ENCODE measurements at regions of chr22 and their contacts with region 1.

Region 1: DNA sequence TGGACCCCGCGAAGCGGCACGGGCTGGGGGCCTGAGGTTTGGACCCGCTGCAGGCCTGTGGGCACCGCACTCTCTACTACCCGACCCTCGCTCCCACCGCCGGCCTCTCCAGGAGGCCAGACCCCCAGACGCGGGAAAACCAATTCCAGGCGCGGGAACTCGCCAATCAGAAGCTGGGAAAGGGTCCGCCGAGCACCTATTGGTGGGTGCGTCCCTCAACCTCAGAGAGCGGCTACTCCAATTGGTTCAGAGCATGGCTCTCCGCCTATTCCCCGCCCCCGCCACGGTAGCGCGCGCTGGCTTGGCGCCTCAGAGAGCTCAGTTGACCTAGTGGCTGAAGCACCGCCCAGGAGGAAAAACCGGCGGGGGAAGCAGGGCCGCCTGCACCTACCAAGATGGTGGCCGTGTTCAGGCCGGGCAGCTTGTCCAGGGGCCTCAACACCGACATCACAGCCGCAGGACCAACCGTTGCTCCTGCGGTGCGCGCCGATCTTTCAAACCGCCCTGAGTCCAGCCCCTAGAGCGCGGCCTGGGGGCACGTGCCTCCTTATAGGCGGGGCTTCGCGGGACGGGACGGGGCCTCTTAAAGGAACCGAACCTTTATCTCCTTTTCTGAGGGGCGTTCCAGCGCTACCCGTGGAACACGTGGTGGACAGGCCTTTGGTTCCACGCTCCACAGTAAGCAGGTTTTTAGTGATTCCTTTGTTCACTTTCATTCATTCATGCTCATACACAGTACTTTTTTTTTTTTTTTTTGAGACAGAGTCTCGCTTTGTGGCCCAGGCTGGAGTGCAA is at the start of gene CENPM:
- DNase-seq: peak; percentile 92

Region 2: DNA sequence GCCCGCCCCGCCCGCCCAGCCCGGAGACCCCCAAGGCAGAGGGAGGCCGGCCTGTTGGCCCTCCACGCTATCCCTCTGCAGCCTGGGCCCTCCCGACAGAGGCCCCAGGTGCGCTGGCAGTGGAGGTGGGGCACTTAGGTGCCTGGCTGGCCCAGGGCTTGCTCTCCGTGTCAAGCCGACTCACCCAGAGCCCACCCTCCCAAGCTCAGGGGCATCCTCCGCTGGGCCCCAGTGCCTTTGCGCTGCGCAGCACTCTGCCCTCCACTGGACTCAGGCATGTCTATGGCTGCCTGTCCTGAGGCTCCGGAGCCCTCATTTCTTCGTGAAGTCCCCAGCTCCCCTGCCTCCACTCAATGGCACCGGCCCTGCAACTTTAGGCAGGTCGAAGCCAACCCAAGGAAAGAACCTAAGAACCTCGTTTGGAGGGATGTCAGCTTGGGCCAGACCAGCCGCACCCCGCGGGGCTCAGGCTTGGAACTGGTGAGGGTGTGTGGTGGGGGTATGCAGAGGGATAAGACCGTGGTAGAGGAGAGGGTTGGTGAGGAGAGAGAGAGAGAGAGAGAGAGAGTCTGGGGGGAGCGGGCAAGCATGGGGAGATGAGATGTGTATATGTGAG is 11.2 kb after region 1 on chr22:
- CTCF ChIA-PET with region 1: interaction called, 3 read pairs
- POLR2A ChIA-PET with region 1: interaction called, 18 read pairs
- DNase-seq: no peak

Region 3: GRCh38 chr22:41963453-41964111 is 16.8 kb after region 1 on chr22:
- CTCF ChIA-PET with region 1: interaction called, 3 read pairs
- POLR2A ChIA-PET with region 1: interaction called, 12 read pairs
- DNase-seq: no peak

Measured in HEK293T (cell line).